ENCODE measurements at regions of chr4 and their contacts with region 1.

Region 1: GRCh38 chr4:6327041-6327917 is 57.6 kb downstream of the WFS1 start:
- DNase-seq: peak; percentile 77 to 86
- ATAC-seq: peak; percentile 72 to 90 (median 87)
- H3K4me3 ChIP-seq: no peak overlapping the region
- H3K4me3 Mint-ChIP-seq: no peak overlapping the region
- H3K27ac ChIP-seq: no peak overlapping the region
- H3K27ac Mint-ChIP-seq: no peak overlapping the region
- H3K4me1 ChIP-seq: no peaks in the 10 kb centered on the region
- H3K4me1 Mint-ChIP-seq: peaks cover 5 to 12% of the 10 kb centered on the region in 2 donors
- H3K27me3 ChIP-seq: no peaks in the 10 kb centered on the region
- H3K27me3 Mint-ChIP-seq: peaks cover 25 to 36% of the 10 kb centered on the region in 2 donors
- CTCF ChIP-seq: peak; percentile 97

Region 2: DNA sequence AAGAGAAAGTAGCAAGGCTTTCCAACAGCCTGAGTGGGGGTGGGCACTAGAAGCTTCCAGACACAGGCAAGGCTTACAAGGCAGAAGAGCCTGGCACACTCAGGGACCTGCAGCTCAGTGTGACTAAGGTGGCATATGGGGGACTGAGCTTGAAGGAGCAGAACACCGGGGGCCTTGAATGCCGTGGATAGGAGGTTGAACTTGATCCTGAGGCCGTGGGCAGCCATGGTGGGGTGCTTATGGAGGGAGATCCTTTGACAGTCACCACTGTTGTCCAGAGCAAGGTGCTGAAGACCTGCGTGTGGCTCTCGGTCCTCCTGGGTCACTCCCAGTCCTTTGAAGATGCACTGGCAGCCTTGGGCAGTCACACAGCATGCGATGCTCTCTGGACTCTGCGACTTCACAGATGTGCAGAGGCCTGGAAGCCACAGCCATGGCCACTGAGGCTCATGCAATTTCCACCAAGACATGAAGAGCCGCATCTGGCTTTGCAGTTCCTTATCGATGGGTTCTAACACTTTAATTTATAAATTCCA is 327.4 kb before region 1 on chr4:
- intact Hi-C with region 1: loop called (anchors 1 kb)
- DNase-seq: no peak
- ATAC-seq: no peak
- H3K4me3 ChIP-seq: no peak overlapping the region
- H3K4me3 Mint-ChIP-seq: no peak overlapping the region
- H3K27ac ChIP-seq: no peak overlapping the region
- H3K27ac Mint-ChIP-seq: no peak overlapping the region
- H3K4me1 ChIP-seq: no peaks in the 10 kb centered on the region
- H3K4me1 Mint-ChIP-seq: peaks cover 0 to 5% of the 10 kb centered on the region in 2 donors
- H3K27me3 ChIP-seq: no peaks in the 10 kb centered on the region
- H3K27me3 Mint-ChIP-seq: no peaks in the 10 kb centered on the region
- CTCF ChIP-seq: no peak

Region 3: GRCh38 chr4:6250235-6250983 is 76.9 kb before region 1 on chr4:
- intact Hi-C with region 1: loop called (anchors 1 kb)
- DNase-seq: peak in 1 of 2 donors; percentile 85
- ATAC-seq: peak; percentile 68 to 77 (median 72)
- H3K4me3 ChIP-seq: no peak overlapping the region
- H3K4me3 Mint-ChIP-seq: no peak overlapping the region
- H3K27ac ChIP-seq: no peak overlapping the region
- H3K27ac Mint-ChIP-seq: no peak overlapping the region
- H3K4me1 ChIP-seq: peaks cover 3% of the 10 kb centered on the region
- H3K4me1 Mint-ChIP-seq: peaks cover 5% of the 10 kb centered on the region in 2 donors
- H3K27me3 ChIP-seq: no peaks in the 10 kb centered on the region
- H3K27me3 Mint-ChIP-seq: peaks cover 32 to 50% of the 10 kb centered on the region in 2 donors
- CTCF ChIP-seq: peak; percentile 78

Region 4: DNA sequence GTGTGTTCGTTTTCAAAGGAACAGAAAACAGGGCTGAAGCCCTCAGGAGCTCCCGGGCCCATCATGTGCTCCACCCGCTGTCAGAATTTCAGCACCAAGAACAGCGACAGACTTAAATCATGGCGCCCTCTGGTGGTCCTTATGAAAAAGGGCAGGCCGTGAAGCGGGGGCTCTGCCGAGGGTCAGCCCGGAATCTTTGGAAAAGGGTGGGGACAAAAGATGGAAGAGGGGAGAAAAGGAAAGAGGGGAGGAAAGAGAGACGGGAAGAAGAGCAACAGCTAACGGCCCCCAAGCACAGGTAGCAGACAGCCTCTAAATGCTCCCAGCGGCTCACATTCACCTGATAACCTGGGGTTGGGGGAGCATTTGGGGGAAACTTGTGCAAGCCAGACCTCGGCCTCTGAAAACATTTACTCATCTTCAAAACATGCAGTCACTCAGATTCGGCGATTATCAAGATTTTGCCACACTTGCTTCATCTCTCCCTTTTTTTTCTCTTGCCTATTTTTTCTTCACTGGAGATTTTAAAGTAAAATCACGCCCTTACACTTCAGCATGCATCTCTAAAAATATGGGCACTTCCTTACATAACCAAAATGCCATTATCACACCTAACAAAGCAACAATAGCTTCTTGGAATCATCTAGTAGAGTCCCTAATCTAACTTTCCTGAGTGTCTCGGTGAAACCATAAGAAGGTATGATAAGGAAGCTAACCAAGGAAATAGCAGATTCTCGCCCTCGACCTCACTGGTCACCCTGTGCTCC is 219.6 kb after region 1 on chr4:
- intact Hi-C with region 1: loop called (anchors 2 kb)
- DNase-seq: peak; percentile 39 to 86
- ATAC-seq: peak; percentile 77 to 91 (median 86)
- H3K4me3 ChIP-seq: no peak overlapping the region
- H3K4me3 Mint-ChIP-seq: no peak overlapping the region
- H3K27ac ChIP-seq: no peak overlapping the region
- H3K27ac Mint-ChIP-seq: no peak overlapping the region
- H3K4me1 ChIP-seq: no peaks in the 10 kb centered on the region
- H3K4me1 Mint-ChIP-seq: peaks cover 5 to 7% of the 10 kb centered on the region in 2 donors
- H3K27me3 ChIP-seq: peaks cover 5% of the 10 kb centered on the region
- H3K27me3 Mint-ChIP-seq: peaks cover 21 to 47% of the 10 kb centered on the region in 2 donors
- CTCF ChIP-seq: peak; percentile 85